Activated CD8-positive, alpha-beta memory T cell treated with anti-CD3 and anti-CD28 coated beads, Interleukin-2, amount 10 ng/mL, durations not matched to agents 7 days and 5 days (primary cell): ENCODE measurements at regions of chr22 and their contacts with region 1.

Region 1: DNA sequence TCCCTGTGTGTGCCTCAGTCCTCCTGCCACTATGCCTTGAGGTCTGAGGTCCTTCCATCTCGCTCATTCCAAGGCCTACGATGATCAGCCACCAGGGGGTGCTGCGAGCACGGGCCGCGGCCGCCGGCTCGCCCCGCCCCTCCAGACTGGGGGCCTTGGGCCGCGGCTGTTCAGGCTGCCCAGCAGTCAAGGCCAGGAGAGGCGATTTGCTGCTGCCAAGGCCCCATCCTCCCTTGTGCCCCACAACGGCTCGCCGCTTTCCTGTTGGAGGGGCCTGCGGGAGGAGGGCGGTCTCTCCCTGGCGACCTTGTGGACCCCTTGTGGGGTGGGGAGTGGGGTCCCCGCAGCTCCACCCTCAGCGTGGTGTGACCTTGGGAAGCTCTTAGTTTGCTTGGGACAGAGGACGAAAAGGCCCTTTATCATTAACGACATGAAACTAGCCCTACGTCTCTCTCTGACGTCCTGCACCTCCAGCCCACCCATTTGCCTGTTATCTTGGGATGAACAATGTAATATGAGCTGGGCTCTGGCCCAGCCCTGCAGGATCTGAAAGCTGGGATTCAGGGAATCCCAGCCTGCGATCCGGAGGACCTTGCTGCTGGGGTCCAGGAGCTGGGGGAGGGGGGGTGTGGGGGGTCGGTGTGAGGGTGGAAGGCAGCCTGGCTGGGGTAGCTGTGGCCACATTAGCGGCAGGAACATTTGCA is 5.3 kb upstream of the GALR3 start:
- DNase-seq: peak; percentile 82
- ATAC-seq: peak; percentile 88
- H3K4me3 Mint-ChIP-seq: no peak overlapping the region
- H3K27ac Mint-ChIP-seq: no peak overlapping the region
- H3K4me1 Mint-ChIP-seq: peaks cover 16% of the 10 kb centered on the region
- H3K27me3 Mint-ChIP-seq: peaks cover 28% of the 10 kb centered on the region

Region 2: GRCh38 chr22:37807410-37808293 is 10.2 kb before region 1 on chr22 and contains the start of gene GCAT:
- CTCF ChIA-PET with region 1: interaction called, 61 read pairs
- DNase-seq: peak; percentile 96
- ATAC-seq: peak; percentile 99
- H3K4me3 Mint-ChIP-seq: peak within 1 kb of the TSS; percentile 73
- H3K27ac Mint-ChIP-seq: no peak within 1 kb of the TSS
- H3K4me1 Mint-ChIP-seq: peaks cover 33% of the 10 kb centered on the region
- H3K27me3 Mint-ChIP-seq: peaks cover 50% of the 10 kb centered on the region
- total RNA-seq, gene GCAT: 14.9 to 18.3 TPM

Region 3: DNA sequence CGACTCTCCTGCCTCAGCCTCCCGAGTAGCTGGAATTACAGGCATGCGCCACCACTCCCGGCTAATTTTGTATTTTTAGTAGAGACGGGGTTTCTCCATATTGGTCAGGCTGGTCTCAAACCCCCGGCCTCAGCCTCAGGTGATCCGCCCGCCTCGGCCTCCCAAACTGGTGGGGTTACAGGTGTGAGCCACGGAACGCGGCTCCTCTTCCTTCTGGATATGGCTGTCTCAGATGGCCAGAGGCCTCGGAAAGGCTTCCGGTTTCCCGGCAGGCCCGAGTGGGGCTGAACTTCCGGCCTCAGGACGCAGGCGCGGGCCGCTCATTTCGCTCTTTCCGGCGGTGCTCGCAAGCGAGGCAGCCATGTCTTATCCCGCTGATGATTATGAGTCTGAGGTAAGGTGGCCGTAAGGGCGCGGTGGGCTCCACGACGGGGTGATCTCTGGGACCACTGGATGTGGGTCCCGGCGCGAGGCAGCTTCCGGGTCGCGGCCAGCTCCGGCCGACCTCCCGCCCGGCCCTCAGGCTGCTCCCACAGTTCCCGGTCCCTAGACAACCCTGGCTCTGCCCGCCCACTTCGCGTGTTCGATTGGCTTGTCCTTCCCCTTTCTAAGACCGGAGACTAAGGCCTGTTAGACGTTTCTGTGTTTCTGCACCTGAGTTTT is 31.4 kb after region 1 on chr22 and contains the start of gene EIF3L:
- CTCF ChIA-PET with region 1: interaction called, 37 read pairs
- DNase-seq: peak; percentile 94
- ATAC-seq: peak; percentile 80
- H3K4me3 Mint-ChIP-seq: peak within 1 kb of the TSS; percentile 93
- H3K27ac Mint-ChIP-seq: peak within 1 kb of the TSS; percentile 96
- H3K4me1 Mint-ChIP-seq: peaks cover 50% of the 10 kb centered on the region
- H3K27me3 Mint-ChIP-seq: no peaks in the 10 kb centered on the region
- total RNA-seq, gene EIF3L: 218 to 370 TPM

Region 4: DNA sequence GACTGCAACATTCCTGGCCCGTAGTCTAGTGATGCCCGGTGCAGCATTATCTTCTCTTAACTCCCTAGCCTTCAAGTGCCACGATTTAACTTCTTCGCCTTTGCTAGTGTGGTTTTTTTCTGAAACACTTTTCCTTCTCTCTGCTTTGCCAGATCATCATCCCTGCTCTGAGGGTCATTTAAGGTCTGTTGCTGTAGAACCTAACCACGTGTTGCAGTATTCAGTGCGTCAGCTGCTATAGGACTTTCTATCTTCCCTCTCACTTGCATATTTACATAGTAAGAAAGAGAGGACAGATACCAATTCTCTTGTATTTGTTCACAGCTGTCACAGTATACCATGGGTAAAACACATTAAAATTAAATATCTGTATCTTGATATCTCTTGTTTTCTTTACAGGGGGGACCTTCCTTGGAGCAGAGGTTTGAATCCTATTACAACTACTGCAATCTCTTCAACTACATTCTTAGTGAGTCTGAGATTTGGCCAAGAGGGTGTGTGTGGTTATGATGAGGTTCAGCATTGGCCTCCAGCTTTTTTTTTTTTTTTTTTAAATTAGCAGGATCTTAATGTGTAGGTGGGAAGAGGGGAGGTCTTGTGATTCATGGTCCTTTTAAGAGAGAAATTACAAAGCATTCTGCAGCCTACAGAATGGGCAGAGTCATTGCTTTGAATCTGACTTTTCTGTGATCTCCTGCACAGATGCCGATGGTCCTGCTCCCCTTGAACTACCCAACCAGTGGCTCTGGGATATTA is 44.9 kb after region 1 on chr22:
- CTCF ChIA-PET with region 1: interaction called, 138 read pairs
- DNase-seq: no peak
- ATAC-seq: no peak
- H3K4me3 Mint-ChIP-seq: no peak overlapping the region
- H3K27ac Mint-ChIP-seq: no peak overlapping the region
- H3K4me1 Mint-ChIP-seq: peaks cover 3% of the 10 kb centered on the region
- H3K27me3 Mint-ChIP-seq: no peaks in the 10 kb centered on the region

Region 5: DNA sequence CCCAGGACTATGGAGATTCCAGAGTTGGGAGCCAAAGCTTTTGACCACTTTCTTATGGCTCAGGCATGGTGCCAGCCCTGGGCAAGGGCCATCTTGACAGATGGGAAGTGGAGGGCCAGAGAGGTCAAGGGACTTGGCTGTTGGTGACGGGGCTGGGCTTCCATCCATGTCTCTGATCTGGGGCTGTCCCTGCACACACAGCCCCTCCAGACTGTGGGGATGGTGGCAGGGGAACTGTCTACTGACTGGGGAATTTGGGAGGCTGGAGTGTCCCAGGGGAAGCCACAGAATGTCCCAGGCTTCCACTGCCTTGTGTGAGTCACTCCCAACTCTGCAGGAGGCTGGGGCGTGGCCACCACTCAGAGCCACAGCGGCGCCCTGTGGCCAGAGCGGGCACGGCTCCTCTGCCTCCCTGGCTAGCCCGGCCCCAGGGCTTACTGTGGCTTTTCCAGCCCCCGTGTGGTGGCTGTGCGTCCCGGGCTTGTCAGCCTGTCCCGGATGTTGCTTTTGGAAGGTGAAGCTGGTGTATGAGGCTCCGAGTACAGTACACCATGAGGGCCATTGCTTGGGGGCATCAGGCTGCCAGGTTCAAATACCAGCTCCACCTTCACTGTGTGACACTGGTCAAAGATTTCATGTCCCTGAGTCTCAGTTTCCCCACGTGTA is 116.0 kb after region 1 on chr22:
- CTCF ChIA-PET with region 1: interaction called, 57 read pairs
- DNase-seq: peak; percentile 90
- ATAC-seq: peak; percentile 99
- H3K4me3 Mint-ChIP-seq: no peak overlapping the region
- H3K27ac Mint-ChIP-seq: peak overlapping the region; percentile 36
- H3K4me1 Mint-ChIP-seq: peaks cover 11% of the 10 kb centered on the region
- H3K27me3 Mint-ChIP-seq: no peaks in the 10 kb centered on the region